H1 (cell line): ENCODE measurements at regions of chr3 and their contacts with region 1.

Region 1: GRCh38 chr3:113626503-113627371 is 69.7 kb downstream of the USF3 start:
- DNase-seq: peak; percentile 34 to 67
- H3K4me3 ChIP-seq: no peak overlapping the region
- H3K27ac ChIP-seq: no peak overlapping the region
- H3K4me1 ChIP-seq: no peaks in the 10 kb centered on the region
- H3K27me3 ChIP-seq: no peaks in the 10 kb centered on the region
- CTCF ChIP-seq: peak; percentile 72 to 99 (median 92)
- EP300 ChIP-seq: no peak
- POLR2A ChIP-seq: no peak
- RAD21 ChIP-seq: peak; percentile 98 to 100

Region 2: GRCh38 chr3:113377158-113377557 is 249.6 kb before region 1 on chr3:
- CTCF ChIA-PET with region 1: no interaction called
- POLR2A ChIA-PET with region 1: no interaction called
- DNase-seq: no peak
- H3K4me3 ChIP-seq: no peak overlapping the region
- H3K27ac ChIP-seq: no peak overlapping the region
- H3K4me1 ChIP-seq: no peaks in the 10 kb centered on the region
- H3K27me3 ChIP-seq: no peaks in the 10 kb centered on the region
- CTCF ChIP-seq: no peak
- EP300 ChIP-seq: no peak
- POLR2A ChIP-seq: no peak
- RAD21 ChIP-seq: no peak

Region 3: DNA sequence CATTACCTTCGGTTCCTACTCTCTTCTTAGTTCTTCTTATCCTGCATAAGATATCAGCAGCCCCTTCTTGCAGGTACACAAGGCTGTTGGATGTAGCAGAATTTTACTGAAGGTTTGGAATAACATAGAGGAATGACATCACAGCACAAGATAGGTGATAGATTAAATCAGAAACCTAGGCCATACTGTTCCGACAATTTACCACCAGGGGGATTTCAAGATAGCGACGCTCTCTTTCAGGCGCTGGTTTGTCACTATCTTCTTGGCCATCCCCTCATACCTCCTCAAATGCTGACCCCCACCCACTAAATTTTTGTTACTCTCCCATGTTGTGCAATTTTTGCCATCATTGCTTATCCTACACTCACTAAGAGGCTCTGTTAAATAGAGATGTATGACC is 90.8 kb before region 1 on chr3:
- CTCF ChIA-PET with region 1: interaction called, 11 read pairs
- POLR2A ChIA-PET with region 1: no interaction called
- DNase-seq: no peak
- H3K4me3 ChIP-seq: no peak overlapping the region
- H3K27ac ChIP-seq: no peak overlapping the region
- H3K4me1 ChIP-seq: peaks cover 0 to 2% (median 0%) of the 10 kb centered on the region in 4 experiments; a peak in 1 of 7 replicates
- H3K27me3 ChIP-seq: peaks cover 32 to 45% (median 39%) of the 10 kb centered on the region in 4 experiments
- CTCF ChIP-seq: peak; percentile 9 to 68 (median 44); a peak in 3 of 4 replicates
- EP300 ChIP-seq: no peak
- POLR2A ChIP-seq: no peak
- RAD21 ChIP-seq: peak; percentile 48 to 52

Region 4: DNA sequence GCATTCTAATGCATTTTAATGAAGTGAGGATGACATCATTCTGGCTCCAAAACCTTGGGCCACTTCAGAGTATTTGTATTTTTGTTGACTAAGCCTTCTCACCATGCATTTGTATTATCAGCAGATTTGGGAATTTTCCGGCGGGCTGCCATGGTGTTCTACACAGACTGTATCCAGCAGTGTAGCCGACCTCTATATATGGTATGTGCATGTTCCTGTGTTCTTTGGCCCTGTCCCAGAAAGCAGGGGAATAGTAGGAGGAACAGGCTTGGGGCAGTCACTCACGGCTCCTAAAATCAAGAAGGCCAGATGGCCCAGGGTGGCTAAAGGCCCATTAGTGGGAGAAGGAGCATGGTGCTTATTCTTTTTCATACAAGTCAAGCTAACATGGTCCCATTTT is 10.8 kb before region 1 on chr3:
- CTCF ChIA-PET with region 1: interaction called, 12 read pairs
- POLR2A ChIA-PET with region 1: no interaction called
- DNase-seq: no peak
- H3K4me3 ChIP-seq: no peak overlapping the region
- H3K27ac ChIP-seq: no peak overlapping the region
- H3K4me1 ChIP-seq: no peaks in the 10 kb centered on the region
- H3K27me3 ChIP-seq: no peaks in the 10 kb centered on the region; a peak in 1 of 7 replicates
- CTCF ChIP-seq: no peak
- EP300 ChIP-seq: no peak
- POLR2A ChIP-seq: no peak
- RAD21 ChIP-seq: no peak

Region 5: DNA sequence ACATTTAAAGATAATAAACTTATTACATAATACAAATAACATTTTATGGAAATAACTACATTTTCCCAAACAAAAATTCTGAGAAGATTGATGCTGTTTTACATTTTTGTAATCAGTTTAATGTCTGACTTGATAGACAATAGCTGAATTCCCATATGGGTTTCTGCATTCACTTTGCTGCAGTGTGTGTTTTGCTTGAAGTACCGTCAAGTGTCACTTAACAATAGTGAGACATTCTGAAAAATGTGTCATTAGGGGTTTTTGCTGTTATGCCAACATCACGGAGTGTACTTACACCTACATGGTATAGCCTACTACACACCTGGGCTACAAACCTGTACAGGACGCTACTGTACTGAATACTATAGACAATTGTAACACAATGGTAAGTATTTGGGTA is 12.2 kb after region 1 on chr3:
- CTCF ChIA-PET with region 1: interaction called, 10 read pairs
- POLR2A ChIA-PET with region 1: interaction called, 3 read pairs
- DNase-seq: no peak
- H3K4me3 ChIP-seq: no peak overlapping the region
- H3K27ac ChIP-seq: no peak overlapping the region
- H3K4me1 ChIP-seq: no peaks in the 10 kb centered on the region
- H3K27me3 ChIP-seq: no peaks in the 10 kb centered on the region
- CTCF ChIP-seq: no peak
- EP300 ChIP-seq: no peak
- POLR2A ChIP-seq: no peak
- RAD21 ChIP-seq: no peak

Region 6: GRCh38 chr3:113721636-113722035 is 94.9 kb after region 1 on chr3:
- CTCF ChIA-PET with region 1: no interaction called
- POLR2A ChIA-PET with region 1: no interaction called
- DNase-seq: no peak
- H3K4me3 ChIP-seq: no peak overlapping the region
- H3K27ac ChIP-seq: no peak overlapping the region
- H3K4me1 ChIP-seq: no peaks in the 10 kb centered on the region
- H3K27me3 ChIP-seq: no peaks in the 10 kb centered on the region
- CTCF ChIP-seq: no peak
- EP300 ChIP-seq: no peak
- POLR2A ChIP-seq: no peak
- RAD21 ChIP-seq: no peak